CD14-positive monocyte (primary cell): ENCODE measurements at regions of chr9 and their contacts with region 1.

Region 1: DNA sequence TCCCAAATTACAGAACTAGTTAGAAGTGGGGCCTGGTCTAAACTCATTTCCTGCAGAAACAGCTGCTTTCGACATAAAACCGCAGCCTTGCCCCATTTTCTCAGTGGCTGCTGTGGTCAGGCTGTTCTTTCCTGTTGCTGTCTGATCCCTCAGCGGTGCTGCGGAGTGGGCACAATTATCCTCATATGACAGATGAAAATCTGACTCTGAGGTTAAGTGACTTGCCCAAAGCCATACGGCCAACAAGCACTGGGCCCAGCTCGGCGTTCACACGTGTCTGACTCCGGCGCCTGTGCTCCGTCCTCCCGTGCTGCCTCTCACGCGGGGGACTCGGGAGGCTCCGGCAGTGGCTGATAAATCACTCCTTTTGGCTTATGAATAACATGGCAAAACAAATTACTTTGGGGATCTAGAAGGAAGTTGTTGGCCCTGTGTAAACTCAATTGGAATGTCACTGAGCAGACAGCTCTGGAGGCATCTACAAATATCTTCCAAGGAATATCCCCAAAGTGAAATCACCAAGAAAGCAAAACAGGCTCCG is 142.6 kb upstream of the LMX1B start:
- DNase-seq: peak; percentile 96 to 99 (median 97)
- H3K4me3 ChIP-seq: peak overlapping the region in 2 of 3 experiments; percentile 8 to 60
- H3K4me3 Mint-ChIP-seq: peak overlapping the region; percentile 67 to 83
- H3K27ac ChIP-seq: peak overlapping the region; percentile 82 to 90
- H3K27ac Mint-ChIP-seq: peak overlapping the region; percentile 92 to 99 (median 97)
- H3K4me1 ChIP-seq: peaks cover 84 to 94% of the 10 kb centered on the region in 2 donors
- H3K4me1 Mint-ChIP-seq: peaks cover 87% of the 10 kb centered on the region
- H3K27me3 ChIP-seq: no peaks in the 10 kb centered on the region
- H3K27me3 Mint-ChIP-seq: peaks cover 0 to 1% (median 0%) of the 10 kb centered on the region in 3 donors
- CTCF ChIP-seq: no peak

Region 2: GRCh38 chr9:126326228-126327005 is 144.7 kb before region 1 on chr9 and contains the start of gene MVB12B:
- intact Hi-C with region 1: loop called in 1 of 2 experiments (anchors 5 kb)
- DNase-seq: peak in 2 of 3 donors; percentile 50
- H3K4me3 ChIP-seq: peak within 1 kb of the TSS; percentile 55 to 78 (median 70)
- H3K4me3 Mint-ChIP-seq: peak within 1 kb of the TSS; percentile 79 to 88
- H3K27ac ChIP-seq: peak within 1 kb of the TSS in 1 of 2 donors; percentile 61
- H3K27ac Mint-ChIP-seq: peak within 1 kb of the TSS in 5 of 7 donors; percentile 63 to 81 (median 68)
- H3K4me1 ChIP-seq: peaks cover 39 to 50% of the 10 kb centered on the region in 2 donors
- H3K4me1 Mint-ChIP-seq: peaks cover 44% of the 10 kb centered on the region
- H3K27me3 ChIP-seq: no peaks in the 10 kb centered on the region
- H3K27me3 Mint-ChIP-seq: peaks cover 0 to 1% (median 1%) of the 10 kb centered on the region in 3 donors
- CTCF ChIP-seq: no peak
- polyA plus RNA-seq, gene MVB12B: 2.8 to 8.1 (median 3.5) TPM

Region 3: GRCh38 chr9:126549246-126550006 is 78.3 kb after region 1 on chr9:
- intact Hi-C with region 1: no loop called
- DNase-seq: no peak
- H3K4me3 ChIP-seq: no peak overlapping the region
- H3K4me3 Mint-ChIP-seq: no peak overlapping the region
- H3K27ac ChIP-seq: no peak overlapping the region
- H3K27ac Mint-ChIP-seq: no peak overlapping the region
- H3K4me1 ChIP-seq: no peaks in the 10 kb centered on the region
- H3K4me1 Mint-ChIP-seq: peaks cover 2% of the 10 kb centered on the region
- H3K27me3 ChIP-seq: no peaks in the 10 kb centered on the region
- H3K27me3 Mint-ChIP-seq: peaks cover 0 to 6% (median 0%) of the 10 kb centered on the region in 3 donors
- CTCF ChIP-seq: no peak